ENCODE measurements at regions of chr2 and their contacts with region 1.

Region 1: DNA sequence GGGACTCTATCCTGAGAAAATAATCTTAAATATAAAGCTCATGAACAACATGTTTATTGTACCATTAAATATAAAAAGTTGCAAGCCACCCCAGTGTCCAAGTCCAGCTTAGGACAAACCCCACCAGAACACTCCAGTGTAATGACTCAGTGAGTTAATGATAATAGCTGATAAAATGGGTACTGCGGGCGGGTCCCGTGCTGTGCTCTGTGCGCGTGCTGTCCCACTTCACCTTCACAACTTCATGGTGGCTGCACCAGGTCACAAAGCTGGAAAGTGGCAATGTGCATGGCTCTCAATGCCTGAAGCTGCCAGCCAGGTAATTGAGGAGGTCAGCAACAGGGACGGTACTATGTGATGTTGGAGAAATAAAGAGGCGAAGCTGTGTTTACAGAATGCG is 18.6 kb downstream of the DGKD start:
- DNase-seq: no peak
- ATAC-seq: no peak
- H3K4me3 Mint-ChIP-seq: no peak overlapping the region
- H3K27ac Mint-ChIP-seq: no peak overlapping the region
- H3K4me1 Mint-ChIP-seq: peaks cover 39% of the 10 kb centered on the region
- H3K27me3 Mint-ChIP-seq: no peaks in the 10 kb centered on the region
- CTCF ChIP-seq: no peak

Region 2: GRCh38 chr2:233261819-233262555 is 110.9 kb before region 1 on chr2:
- CTCF ChIA-PET with region 1: no interaction called
- POLR2A ChIA-PET with region 1: no interaction called
- intact Hi-C with region 1: no loop called
- DNase-seq: no peak
- ATAC-seq: peak; percentile 49
- H3K4me3 Mint-ChIP-seq: no peak overlapping the region
- H3K27ac Mint-ChIP-seq: peak overlapping the region; percentile 55
- H3K4me1 Mint-ChIP-seq: peaks cover 52% of the 10 kb centered on the region
- H3K27me3 Mint-ChIP-seq: no peaks in the 10 kb centered on the region
- CTCF ChIP-seq: no peak

Region 3: GRCh38 chr2:233288719-233289118 is 84.1 kb before region 1 on chr2:
- CTCF ChIA-PET with region 1: no interaction called
- POLR2A ChIA-PET with region 1: no interaction called
- intact Hi-C with region 1: no loop called
- DNase-seq: no peak
- ATAC-seq: no peak
- H3K4me3 Mint-ChIP-seq: no peak overlapping the region
- H3K27ac Mint-ChIP-seq: no peak overlapping the region
- H3K4me1 Mint-ChIP-seq: no peaks in the 10 kb centered on the region
- H3K27me3 Mint-ChIP-seq: no peaks in the 10 kb centered on the region
- CTCF ChIP-seq: no peak

Region 4: GRCh38 chr2:233331536-233331935 is 41.3 kb before region 1 on chr2:
- CTCF ChIA-PET with region 1: no interaction called
- POLR2A ChIA-PET with region 1: no interaction called
- intact Hi-C with region 1: no loop called
- DNase-seq: peak; percentile 81
- ATAC-seq: peak; percentile 93
- H3K4me3 Mint-ChIP-seq: peak overlapping the region; percentile 45
- H3K27ac Mint-ChIP-seq: peak overlapping the region; percentile 94
- H3K4me1 Mint-ChIP-seq: peaks cover 36% of the 10 kb centered on the region
- H3K27me3 Mint-ChIP-seq: no peaks in the 10 kb centered on the region
- CTCF ChIP-seq: no peak

Region 5: DNA sequence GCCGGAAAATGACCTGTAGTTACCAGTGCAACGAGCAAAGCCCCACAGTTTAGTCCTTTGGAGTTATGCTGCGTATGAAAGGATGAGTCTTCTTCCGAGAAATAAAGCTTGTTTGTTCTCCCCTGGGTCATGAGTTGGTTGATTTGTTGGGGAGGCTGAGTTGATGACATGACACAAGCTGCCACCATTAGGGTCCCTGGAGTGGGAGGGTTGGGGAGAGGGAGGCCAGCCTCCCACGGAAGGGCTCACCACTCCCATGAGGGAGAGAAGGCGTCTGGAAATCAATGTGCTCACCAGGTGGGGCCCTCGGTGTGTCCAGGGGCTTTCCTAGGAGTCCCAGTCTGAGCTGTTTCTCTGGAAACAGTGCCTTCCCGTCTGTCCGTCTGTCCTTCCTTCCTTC is 25.9 kb before region 1 on chr2:
- CTCF ChIA-PET with region 1: no interaction called
- POLR2A ChIA-PET with region 1: no interaction called
- intact Hi-C with region 1: no loop called
- DNase-seq: no peak
- ATAC-seq: no peak
- H3K4me3 Mint-ChIP-seq: no peak overlapping the region
- H3K27ac Mint-ChIP-seq: no peak overlapping the region
- H3K4me1 Mint-ChIP-seq: peaks cover 22% of the 10 kb centered on the region
- H3K27me3 Mint-ChIP-seq: no peaks in the 10 kb centered on the region
- CTCF ChIP-seq: no peak

Region 6: GRCh38 chr2:233387667-233388528 is 15.0 kb after region 1 on chr2:
- CTCF ChIA-PET with region 1: interaction called, 13 read pairs
- POLR2A ChIA-PET with region 1: interaction called, 4 read pairs
- intact Hi-C with region 1: no loop called
- DNase-seq: no peak
- ATAC-seq: no peak
- H3K4me3 Mint-ChIP-seq: peak overlapping the region; percentile 69
- H3K27ac Mint-ChIP-seq: peak overlapping the region; percentile 89
- H3K4me1 Mint-ChIP-seq: peaks cover 70% of the 10 kb centered on the region
- H3K27me3 Mint-ChIP-seq: no peaks in the 10 kb centered on the region
- CTCF ChIP-seq: no peak